Vagina (tissue), 2 donors: ENCODE measurements at regions of chrX and their contacts with region 1.

Region 1: DNA sequence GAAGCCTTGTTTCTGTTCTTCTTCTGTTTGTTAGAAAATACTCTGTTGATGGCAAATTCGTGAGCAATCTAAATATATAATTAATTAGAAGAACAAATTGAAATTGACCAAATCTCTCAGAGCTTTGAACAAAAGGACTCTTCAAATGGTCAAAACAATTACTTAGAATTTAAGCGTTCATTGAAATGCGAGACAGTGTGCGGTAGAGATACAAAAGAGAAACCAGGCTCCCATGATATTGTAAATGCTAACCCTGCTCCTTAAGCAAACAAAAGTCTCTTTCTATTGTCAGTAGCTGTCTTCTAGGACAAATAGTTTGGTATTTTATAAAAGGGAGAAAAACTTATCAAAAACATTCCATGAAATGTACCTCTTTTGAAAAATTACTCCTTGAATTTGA is 453.4 kb upstream of the MAGEB2 start:
- DNase-seq: no peak
- H3K4me3 ChIP-seq: no peak overlapping the region
- H3K27ac ChIP-seq: no peak overlapping the region
- H3K4me1 ChIP-seq: no peaks in the 10 kb centered on the region
- H3K27me3 ChIP-seq: no peaks in the 10 kb centered on the region
- CTCF ChIP-seq: no peak
- POLR2A ChIP-seq: no peak

Region 2: DNA sequence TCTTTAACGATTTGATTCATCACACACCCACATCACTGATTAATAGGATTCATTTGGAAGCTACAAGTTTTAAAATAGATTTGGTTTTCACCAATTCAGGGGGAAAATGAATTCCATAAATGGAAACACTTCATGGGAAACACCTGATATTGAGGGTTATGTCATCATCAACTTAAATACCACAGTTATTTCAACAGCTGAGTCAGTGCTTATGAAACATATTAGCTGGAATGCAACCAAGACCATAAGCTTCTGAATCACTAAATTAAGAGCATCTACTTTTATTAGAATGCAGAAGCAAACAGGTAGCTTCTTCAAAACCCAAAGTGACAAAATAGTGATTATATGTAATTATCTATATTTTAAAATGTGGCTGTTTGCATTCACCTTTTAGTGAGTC is 1573.0 kb before region 1 on chrX:
- intact Hi-C with region 1: no loop called
- DNase-seq: no peak
- H3K4me3 ChIP-seq: no peak overlapping the region
- H3K27ac ChIP-seq: no peak overlapping the region
- H3K4me1 ChIP-seq: no peaks in the 10 kb centered on the region
- H3K27me3 ChIP-seq: no peaks in the 10 kb centered on the region
- CTCF ChIP-seq: no peak
- POLR2A ChIP-seq: no peak

Region 3: DNA sequence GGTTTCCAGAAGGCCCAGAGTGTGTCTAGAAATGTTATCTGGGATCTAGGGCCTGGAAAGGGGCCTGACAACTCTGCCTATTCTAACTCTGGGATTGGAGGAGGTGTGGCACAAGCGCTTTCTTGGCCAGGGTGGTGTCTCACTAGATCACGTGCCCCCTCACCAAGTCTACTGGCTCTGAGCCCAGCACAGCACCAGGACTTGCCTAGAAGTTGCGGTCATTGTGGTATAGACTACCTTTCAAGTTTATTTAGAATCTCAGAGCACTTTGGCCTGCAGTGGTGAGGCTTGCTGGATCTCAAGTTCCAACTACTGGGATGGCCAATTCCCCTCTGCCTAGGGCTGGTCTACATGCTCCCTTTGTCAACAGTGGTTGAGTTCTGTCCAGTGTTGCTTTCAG is 230.1 kb after region 1 on chrX:
- intact Hi-C with region 1: loop called (anchors 5 kb)
- DNase-seq: no peak
- H3K4me3 ChIP-seq: no peak overlapping the region
- H3K27ac ChIP-seq: no peak overlapping the region
- H3K4me1 ChIP-seq: no peaks in the 10 kb centered on the region
- H3K27me3 ChIP-seq: no peaks in the 10 kb centered on the region
- CTCF ChIP-seq: no peak
- POLR2A ChIP-seq: no peak